Head of caudate nucleus (tissue), 42 donors: ENCODE measurements at regions of chr4 and their contacts with region 1.

Region 1: DNA sequence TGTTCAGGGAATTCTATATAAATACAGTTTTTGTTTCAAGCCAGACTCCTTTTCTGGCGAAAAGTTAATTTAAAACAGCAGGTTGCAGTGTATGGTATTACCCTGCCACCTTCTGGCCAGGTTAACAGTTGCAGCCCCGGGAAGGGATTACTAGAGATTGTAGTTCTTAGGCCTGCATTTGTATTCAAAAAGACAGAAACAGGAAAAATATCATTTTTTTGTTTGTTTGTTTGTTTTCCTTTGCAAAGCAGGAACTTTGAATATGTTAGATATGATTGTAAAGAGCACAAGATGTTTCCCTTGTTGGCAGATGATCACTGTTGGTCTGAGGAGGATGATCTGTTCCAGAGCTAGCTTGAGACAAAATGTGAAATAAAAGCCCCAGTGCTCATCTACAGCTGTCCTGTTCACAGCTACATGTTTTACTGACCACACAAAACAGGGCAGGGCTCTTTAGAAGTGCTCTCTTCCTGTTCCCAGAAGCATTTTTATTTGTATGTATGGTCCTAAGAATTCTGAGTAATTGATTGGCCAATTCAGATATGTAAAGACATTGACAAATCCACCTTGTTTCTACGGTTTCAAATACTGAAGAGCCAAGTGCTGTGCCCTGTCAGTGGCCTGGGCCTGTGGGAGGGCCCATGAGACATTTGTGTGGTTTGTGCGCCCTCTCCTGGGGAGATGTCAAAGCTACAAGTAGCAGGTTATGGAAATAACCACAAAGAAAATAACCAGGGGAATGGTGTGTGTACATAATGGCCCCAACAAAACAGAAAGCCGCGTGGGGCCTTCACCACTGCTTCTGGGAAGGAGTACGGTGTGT is 57.9 kb downstream of the CLDN22 start:
- DNase-seq: peak; percentile 68 to 93 (median 85)

Region 2: DNA sequence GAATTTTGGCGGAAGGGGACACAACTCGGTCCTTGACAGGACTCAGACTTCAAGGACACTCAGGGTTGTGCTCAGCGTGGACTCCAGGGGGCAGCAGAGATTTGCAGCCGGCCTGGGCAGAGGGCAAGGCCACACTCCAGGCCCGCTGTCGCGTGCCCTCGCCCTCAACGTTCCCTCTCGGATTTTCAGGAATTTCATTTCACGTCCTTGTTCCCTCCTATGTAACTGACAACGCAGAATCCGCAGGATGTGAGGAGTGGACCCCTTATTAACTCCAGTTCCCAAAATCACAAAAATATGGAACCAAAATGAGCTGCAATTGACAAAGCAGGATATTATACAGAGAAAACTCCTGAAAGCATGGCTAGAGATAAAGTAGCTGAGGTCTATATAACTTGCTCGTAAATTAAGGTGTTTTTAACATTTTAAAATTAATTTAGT is 323.9 kb before region 1 on chr4:
- intact Hi-C with region 1: loop called (anchors 2 kb)
- DNase-seq: peak; percentile 35 to 87 (median 74)

Region 3: DNA sequence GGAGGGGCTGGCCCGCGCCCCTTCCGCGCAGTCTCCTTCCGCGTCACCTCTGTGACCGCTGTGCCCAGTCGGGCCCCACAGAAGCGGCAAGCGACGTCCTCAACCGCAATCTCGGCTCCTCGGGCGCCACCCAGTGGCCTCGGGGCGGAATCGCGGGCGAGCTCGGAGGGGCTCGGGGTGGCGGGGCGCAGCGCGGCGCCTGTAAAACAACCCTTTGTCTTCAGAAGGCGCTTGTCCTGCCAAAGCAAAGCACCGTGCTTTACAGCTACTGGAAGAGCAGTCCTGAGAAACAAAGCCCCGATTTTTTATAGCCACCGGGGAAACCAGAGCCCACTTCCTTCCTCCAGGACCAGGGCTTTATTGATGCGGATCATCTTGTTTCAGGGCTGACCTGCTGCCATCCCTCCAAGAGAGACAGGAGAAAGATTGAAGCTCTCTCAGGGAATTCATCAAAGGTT is 145.0 kb after region 1 on chr4:
- intact Hi-C with region 1: loop called (anchors 10 kb)
- DNase-seq: peak; percentile 78 to 97 (median 92)